Activated B cell treated with CpG ODN at 0.5 μM for 24 hours (primary cell): ENCODE measurements at regions of chr11 and their contacts with region 1.

Region 1: DNA sequence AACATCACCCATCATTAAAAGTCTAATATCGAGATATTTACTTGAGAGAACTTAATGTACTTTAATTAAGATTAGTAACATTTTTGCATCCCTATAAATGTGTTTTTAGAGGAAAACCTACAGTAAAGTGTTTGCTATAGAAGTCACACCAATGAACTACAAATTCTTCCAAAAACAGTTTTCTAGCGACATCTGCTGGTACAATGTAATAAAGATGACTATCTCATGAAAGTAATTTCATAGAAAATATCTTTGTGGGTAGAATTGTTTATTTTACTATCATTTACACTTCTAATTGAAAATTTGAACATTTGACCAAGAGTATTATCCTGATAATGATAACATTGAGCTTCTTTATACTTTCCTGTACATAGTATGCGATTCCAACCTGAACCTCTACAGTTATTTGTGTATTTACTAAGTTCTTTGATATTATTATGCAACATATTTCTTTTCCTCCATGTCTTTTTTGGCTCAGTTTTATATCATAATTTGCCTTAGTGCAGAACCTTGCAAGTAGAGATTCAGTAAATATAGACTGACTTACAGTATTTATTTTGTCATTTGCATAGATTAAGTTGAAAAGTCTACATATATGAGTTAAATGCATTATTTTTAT is 252.7 kb downstream of the TMEM135 start:
- DNase-seq: no peak
- ATAC-seq: no peak
- H3K4me3 Mint-ChIP-seq: no peak overlapping the region
- H3K27ac Mint-ChIP-seq: no peak overlapping the region
- H3K4me1 Mint-ChIP-seq: no peaks in the 10 kb centered on the region
- H3K27me3 Mint-ChIP-seq: no peaks in the 10 kb centered on the region
- CTCF ChIP-seq: peak; percentile 49

Region 2: DNA sequence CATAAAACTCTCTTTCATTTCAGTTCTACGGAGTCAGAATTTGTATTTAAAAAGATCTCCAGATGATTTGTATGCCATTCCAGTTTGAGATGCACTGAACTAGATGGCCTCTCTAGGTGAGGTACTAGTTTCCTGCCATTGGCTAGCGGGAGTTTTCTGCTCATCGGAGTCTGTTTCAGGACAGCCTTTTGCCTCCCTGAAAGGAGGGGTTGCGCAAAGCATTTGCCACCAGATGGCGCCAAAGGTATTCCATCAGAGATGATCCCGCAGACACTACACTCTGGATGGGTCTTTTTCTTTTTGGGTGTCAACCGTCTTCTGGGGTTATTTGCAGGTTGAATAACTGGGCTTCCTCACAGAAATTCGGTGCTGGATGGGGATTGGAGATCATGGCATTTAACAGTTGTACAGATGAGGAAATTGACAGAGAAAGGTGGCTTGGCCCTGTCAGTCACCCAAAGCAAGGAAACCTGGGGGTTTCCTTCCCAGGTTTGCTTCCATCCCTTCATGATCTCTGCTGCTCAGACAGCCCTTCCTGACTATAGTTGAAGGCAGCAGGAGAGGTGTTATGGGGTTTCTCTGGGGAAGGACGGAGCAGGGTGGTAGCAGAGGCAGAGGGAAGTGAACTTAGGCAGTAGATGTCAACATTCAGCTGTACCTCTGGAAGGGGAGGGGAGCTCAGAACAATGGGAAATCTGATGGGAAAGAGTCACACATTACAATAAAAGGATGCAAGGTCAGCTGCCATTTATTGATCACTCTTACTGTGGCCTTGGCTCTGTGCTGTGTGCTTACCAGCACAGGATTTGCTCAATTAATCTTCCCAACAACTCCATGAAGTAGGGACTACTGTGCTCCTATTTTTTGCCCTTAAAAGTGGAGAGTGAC is 834.1 kb before region 1 on chr11:
- CTCF ChIA-PET with region 1: no interaction called
- POLR2A ChIA-PET with region 1: no interaction called
- intact Hi-C with region 1: loop called (anchors 1 kb)
- DNase-seq: peak; percentile 45
- ATAC-seq: peak; percentile 47
- H3K4me3 Mint-ChIP-seq: no peak overlapping the region
- H3K27ac Mint-ChIP-seq: no peak overlapping the region
- H3K4me1 Mint-ChIP-seq: peaks cover 2% of the 10 kb centered on the region
- H3K27me3 Mint-ChIP-seq: no peaks in the 10 kb centered on the region
- CTCF ChIP-seq: peak; percentile 65

Region 3: GRCh38 chr11:86869966-86870570 is 420.3 kb before region 1 on chr11:
- CTCF ChIA-PET with region 1: interaction called, 3 read pairs
- POLR2A ChIA-PET with region 1: no interaction called
- intact Hi-C with region 1: loop called (anchors 1 kb)
- DNase-seq: no peak
- ATAC-seq: peak; percentile 50
- H3K4me3 Mint-ChIP-seq: no peak overlapping the region
- H3K27ac Mint-ChIP-seq: no peak overlapping the region
- H3K4me1 Mint-ChIP-seq: no peaks in the 10 kb centered on the region
- H3K27me3 Mint-ChIP-seq: peaks cover 3% of the 10 kb centered on the region
- CTCF ChIP-seq: peak; percentile 23

Region 4: GRCh38 chr11:86938900-86939880 is 351.2 kb before region 1 on chr11:
- CTCF ChIA-PET with region 1: interaction called, 43 read pairs
- POLR2A ChIA-PET with region 1: no interaction called
- intact Hi-C with region 1: loop called (anchors 1 kb)
- DNase-seq: no peak
- ATAC-seq: no peak
- H3K4me3 Mint-ChIP-seq: no peak overlapping the region
- H3K27ac Mint-ChIP-seq: no peak overlapping the region
- H3K4me1 Mint-ChIP-seq: no peaks in the 10 kb centered on the region
- H3K27me3 Mint-ChIP-seq: no peaks in the 10 kb centered on the region
- CTCF ChIP-seq: no peak

Region 5: DNA sequence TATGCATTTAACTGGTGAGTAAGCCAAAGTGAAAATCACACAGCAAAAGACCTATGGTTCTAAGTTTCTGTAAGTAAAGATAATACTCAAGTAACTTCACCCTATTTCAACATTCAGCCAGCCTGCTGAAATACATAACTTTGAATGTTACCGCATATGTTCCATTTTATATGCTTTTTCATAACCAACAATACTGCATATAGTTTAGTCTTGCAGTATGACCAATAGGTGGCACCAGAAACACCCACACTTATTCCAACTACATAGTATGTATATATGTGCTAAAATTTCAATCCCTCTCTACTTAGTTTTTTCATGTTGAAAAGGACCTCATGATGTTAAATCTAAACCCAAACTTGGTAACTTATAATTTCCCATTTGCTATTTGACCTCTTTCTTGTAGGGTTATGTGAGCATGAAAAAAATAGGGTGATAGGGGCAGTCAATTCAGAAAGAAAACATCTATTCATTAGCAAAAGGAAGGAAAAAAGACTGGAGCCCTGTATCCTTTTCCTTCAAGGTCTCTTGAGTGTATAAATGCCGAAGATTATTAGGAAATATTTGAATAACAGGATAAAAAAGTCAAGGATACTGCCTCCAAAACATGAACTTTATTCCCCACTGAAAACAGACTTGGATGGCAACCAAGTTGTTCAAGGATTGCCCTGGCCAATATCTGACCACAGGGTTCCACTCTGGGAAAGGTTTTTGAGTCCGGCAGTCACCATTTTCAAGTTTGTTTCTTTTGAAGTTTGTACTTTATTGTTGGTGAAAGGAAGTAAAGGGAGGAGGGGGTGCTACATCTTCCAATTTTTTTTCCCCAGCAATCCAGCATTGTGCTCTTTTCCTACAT is 311.4 kb before region 1 on chr11:
- CTCF ChIA-PET with region 1: interaction called, 5 read pairs
- POLR2A ChIA-PET with region 1: no interaction called
- intact Hi-C with region 1: loop called (anchors 1 kb)
- DNase-seq: no peak
- ATAC-seq: no peak
- H3K4me3 Mint-ChIP-seq: no peak overlapping the region
- H3K27ac Mint-ChIP-seq: no peak overlapping the region
- H3K4me1 Mint-ChIP-seq: no peaks in the 10 kb centered on the region
- H3K27me3 Mint-ChIP-seq: peaks cover 5% of the 10 kb centered on the region
- CTCF ChIP-seq: no peak

Region 6: DNA sequence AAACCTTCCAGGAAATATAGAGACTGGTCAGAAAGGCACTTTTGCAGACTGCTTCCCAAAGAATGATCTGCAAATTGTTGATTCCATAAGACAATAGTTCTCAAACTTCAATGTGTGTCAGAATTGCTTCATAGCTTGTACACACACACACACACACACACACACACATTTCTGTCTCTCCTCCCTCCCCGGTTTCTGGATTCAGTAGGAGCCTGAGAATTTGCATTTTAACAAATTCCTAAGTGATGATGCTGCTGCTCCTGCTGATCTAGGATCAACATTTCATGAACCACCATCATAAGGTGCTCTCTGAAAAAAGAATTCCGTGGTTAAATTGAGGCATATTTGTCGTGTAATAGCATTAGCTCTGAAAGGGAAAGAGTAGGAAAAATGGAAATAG is 299.9 kb before region 1 on chr11:
- CTCF ChIA-PET with region 1: interaction called, 10 read pairs
- POLR2A ChIA-PET with region 1: no interaction called
- intact Hi-C with region 1: loop called (anchors 1 kb)
- DNase-seq: no peak
- ATAC-seq: no peak
- H3K4me3 Mint-ChIP-seq: no peak overlapping the region
- H3K27ac Mint-ChIP-seq: no peak overlapping the region
- H3K4me1 Mint-ChIP-seq: no peaks in the 10 kb centered on the region
- H3K27me3 Mint-ChIP-seq: peaks cover 4% of the 10 kb centered on the region
- CTCF ChIP-seq: no peak